ENCODE measurements at regions of chr12 and their contacts with region 1.

Region 1: DNA sequence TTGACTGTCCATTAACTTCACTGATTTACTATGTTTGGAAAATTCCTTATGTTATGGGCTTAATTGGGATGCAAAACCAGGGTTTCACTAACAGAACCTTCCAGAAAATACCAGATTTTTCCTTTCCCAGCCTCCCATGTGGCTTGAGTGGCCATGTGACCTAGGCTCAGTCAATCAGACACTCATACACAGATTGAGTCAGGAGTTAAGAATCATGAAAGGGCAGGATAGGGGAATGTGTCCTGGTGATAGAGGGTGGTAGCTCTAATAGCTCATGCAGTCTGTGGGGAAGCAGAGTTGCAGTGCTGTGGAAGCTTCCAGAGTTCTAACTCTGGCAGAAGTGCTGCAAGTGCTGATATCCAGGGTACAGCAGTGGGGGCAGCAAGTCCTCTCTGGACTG is 134.1 kb upstream of the IFNG-AS1 start:
- DNase-seq: no peak
- ATAC-seq: no peak
- H3K4me3 Mint-ChIP-seq: no peak overlapping the region
- H3K27ac Mint-ChIP-seq: no peak overlapping the region
- H3K4me1 Mint-ChIP-seq: no peaks in the 10 kb centered on the region
- H3K27me3 Mint-ChIP-seq: peaks cover 5% of the 10 kb centered on the region
- CTCF ChIP-seq: no peak

Region 2: DNA sequence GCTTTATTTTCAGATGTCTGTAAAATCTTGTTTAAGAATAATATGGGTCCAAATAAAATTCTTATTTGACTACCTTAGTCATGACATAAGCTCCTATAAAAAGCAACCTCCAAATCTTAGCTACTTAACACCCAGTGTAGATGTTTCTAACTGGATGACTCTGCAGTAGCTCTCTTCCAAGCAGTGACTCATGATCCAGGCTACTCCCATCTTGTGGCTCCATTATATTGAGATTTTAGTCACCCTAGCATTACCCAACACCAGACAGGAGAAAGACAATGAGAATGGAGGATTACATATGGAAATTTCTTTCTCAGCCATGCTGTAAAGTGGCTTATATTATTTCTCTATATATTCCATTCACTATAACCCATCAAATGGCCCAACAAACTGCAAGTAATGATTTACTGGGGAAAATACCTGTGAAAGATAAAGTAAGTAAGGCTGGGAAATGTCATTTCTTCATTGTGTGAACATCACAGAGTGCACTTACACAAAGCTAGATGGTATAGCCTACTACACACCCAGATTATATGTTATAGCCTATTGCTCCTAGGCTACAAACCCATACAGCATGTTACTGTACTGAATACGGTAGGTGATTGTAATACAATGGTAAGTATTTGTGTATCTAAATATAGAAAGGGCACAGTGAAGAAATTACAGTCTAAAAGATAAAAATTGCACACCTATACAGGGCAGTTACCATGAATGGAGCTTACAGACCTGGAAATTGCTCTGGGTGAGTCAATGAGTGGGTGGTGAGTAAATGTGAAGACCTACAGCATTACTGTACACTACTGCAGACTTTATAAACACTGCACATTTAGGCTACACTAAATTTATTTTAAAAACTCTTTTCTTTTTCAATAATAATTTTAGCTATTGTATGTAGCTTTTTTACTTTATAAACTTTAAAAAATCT is 43.4 kb before region 1 on chr12:
- CTCF ChIA-PET with region 1: no interaction called
- POLR2A ChIA-PET with region 1: no interaction called
- intact Hi-C with region 1: loop called (anchors 10 kb)
- DNase-seq: no peak
- ATAC-seq: no peak
- H3K4me3 Mint-ChIP-seq: no peak overlapping the region
- H3K27ac Mint-ChIP-seq: no peak overlapping the region
- H3K4me1 Mint-ChIP-seq: no peaks in the 10 kb centered on the region
- H3K27me3 Mint-ChIP-seq: peaks cover 3% of the 10 kb centered on the region
- CTCF ChIP-seq: no peak

Measured in activated B cell treated with CpG ODN at 0.5 μM for 24 hours (primary cell).